ENCODE measurements at regions of chr5 and their contacts with region 1.

Region 1: GRCh38 chr5:145825751-145826180 is 9.4 kb downstream of the PRELID2 start:
- DNase-seq: no peak
- ATAC-seq: peak; percentile 61
- H3K4me3 Mint-ChIP-seq: no peak overlapping the region
- H3K27ac Mint-ChIP-seq: no peak overlapping the region
- H3K4me1 Mint-ChIP-seq: peaks cover 9% of the 10 kb centered on the region
- H3K27me3 Mint-ChIP-seq: peaks cover 4% of the 10 kb centered on the region

Region 2: DNA sequence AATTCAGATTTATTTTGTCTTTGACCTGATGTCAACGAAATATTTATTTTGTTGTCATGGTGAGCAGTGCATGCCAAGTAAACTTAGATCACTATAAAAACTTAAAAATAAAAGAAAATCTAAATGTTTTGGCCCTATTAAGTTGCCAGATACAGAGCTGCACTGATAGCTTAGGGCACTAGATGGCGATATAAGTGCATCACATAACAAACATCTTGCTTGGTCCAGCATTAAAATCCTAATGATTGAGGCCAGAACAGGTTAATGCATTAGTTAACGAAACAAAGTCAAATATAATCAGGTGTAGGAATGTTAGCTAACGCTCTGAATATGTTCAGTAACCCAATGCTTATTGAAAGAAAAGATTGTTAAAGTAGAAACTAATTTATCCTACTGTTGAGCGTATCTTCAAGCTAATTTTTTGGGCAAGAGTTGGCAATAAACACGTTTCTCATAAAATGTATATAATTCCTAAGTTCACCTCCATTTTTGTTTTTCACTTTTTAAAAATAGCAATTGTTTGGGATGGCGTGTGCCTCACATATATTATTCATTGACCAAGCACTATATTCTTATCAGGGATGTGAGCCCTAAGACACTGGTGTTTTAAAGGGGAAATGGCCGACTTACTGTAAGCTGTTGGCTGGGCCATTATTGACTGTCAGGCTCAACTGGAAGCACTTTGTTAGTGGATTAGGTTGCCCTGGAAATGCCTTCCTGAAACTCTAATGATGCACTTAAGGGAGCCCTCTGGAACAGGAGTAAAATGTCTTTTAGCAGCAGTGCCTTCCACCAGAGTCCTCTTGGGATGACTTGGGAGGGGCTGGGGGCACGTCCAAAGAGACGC is 1621.8 kb before region 1 on chr5:
- CTCF ChIA-PET with region 1: interaction called, 28 read pairs
- POLR2A ChIA-PET with region 1: no interaction called
- DNase-seq: peak; percentile 56
- ATAC-seq: peak; percentile 72
- H3K4me3 Mint-ChIP-seq: no peak overlapping the region
- H3K27ac Mint-ChIP-seq: no peak overlapping the region
- H3K4me1 Mint-ChIP-seq: no peaks in the 10 kb centered on the region
- H3K27me3 Mint-ChIP-seq: peaks cover 55% of the 10 kb centered on the region

Region 3: GRCh38 chr5:145681686-145682085 is 144.1 kb before region 1 on chr5:
- CTCF ChIA-PET with region 1: interaction called, 21 read pairs
- POLR2A ChIA-PET with region 1: no interaction called
- DNase-seq: peak; percentile 52
- ATAC-seq: no peak
- H3K4me3 Mint-ChIP-seq: no peak overlapping the region
- H3K27ac Mint-ChIP-seq: no peak overlapping the region
- H3K4me1 Mint-ChIP-seq: no peaks in the 10 kb centered on the region
- H3K27me3 Mint-ChIP-seq: no peaks in the 10 kb centered on the region

Region 4: DNA sequence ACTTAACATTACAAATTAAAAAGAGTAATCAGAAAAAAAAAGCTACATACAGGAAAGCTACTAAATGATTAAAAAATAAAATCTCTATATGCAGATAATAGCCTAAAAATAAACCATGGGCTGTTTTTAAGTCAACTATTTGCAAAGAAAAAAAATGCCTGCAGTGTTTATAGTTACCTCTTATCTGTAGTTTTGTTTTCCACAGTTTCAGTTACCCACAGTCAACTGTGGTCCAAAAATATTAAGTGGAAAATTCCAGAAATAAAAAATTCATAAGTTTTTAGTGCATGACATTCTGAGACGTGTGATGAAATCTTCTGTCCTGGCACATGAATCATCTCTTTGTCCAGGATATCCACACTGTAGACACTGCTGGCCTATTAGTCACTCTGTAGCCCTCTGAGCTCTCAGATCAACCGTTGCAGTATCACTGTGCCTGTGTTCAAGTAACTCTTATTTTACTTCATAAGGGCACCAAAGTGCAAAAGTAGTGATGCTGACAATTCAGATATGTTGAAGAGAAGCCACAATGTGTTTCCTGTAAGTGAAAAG is 49.8 kb before region 1 on chr5:
- CTCF ChIA-PET with region 1: no interaction called
- POLR2A ChIA-PET with region 1: no interaction called
- DNase-seq: no peak
- ATAC-seq: no peak
- H3K4me3 Mint-ChIP-seq: no peak overlapping the region
- H3K27ac Mint-ChIP-seq: no peak overlapping the region
- H3K4me1 Mint-ChIP-seq: no peaks in the 10 kb centered on the region
- H3K27me3 Mint-ChIP-seq: no peaks in the 10 kb centered on the region